ENCODE measurements at regions of chr18 and their contacts with region 1.

Region 1: GRCh38 chr18:54119524-54120019 is 104.9 kb downstream of the MBD2 start:
- DNase-seq: no peak
- H3K4me3 ChIP-seq: no peak overlapping the region
- H3K27ac ChIP-seq: no peak overlapping the region
- H3K4me1 ChIP-seq: no peaks in the 10 kb centered on the region
- H3K27me3 ChIP-seq: no peaks in the 10 kb centered on the region
- CTCF ChIP-seq: peak; percentile 20 to 69 (median 69)

Region 2: DNA sequence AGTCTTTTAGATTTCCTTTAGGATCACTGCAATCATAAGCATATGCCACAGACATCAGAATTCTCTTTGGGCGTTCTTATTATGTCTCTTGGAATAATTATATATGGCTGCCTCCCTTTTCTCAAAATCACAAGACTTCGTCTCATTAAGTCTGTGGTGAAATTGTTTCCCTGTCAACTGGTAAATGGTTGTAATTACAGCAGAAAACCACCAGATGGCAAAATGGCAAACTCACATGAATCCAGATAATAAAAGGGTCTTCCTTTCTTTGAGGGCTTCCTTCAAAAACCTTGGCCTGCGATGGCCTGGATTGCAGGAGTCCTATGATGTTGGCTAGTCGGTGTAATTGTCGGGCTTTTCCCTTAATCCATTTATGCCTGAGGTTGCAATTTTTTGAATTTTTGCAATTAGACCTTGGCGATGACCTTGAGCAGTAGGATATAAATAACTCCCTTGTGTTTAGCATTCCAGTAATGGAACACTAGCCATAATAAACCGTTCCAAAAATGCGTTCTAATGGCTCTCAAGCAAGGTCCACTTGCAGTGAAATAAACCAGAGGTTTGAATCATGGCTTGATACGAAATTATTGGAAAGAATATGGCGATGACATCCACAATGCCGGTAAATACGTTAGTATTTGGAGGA is 551.5 kb before region 1 on chr18:
- intact Hi-C with region 1: loop called (anchors 10 kb)
- DNase-seq: no peak
- H3K4me3 ChIP-seq: no peak overlapping the region
- H3K27ac ChIP-seq: no peak overlapping the region
- H3K4me1 ChIP-seq: no peaks in the 10 kb centered on the region
- H3K27me3 ChIP-seq: no peaks in the 10 kb centered on the region
- CTCF ChIP-seq: peak in 2 of 3 experiments; percentile 30 to 46

Region 3: GRCh38 chr18:53698907-53699306 is 420.7 kb before region 1 on chr18:
- intact Hi-C with region 1: loop called (anchors 10 kb)
- DNase-seq: no peak
- H3K4me3 ChIP-seq: no peak overlapping the region
- H3K27ac ChIP-seq: no peak overlapping the region
- H3K4me1 ChIP-seq: no peaks in the 10 kb centered on the region
- H3K27me3 ChIP-seq: no peaks in the 10 kb centered on the region
- CTCF ChIP-seq: peak in 1 of 3 experiments; percentile 17

Region 4: GRCh38 chr18:54983041-54983686 is 863.6 kb after region 1 on chr18:
- intact Hi-C with region 1: no loop called
- DNase-seq: no peak
- H3K4me3 ChIP-seq: no peak overlapping the region
- H3K27ac ChIP-seq: no peak overlapping the region
- H3K4me1 ChIP-seq: no peaks in the 10 kb centered on the region
- H3K27me3 ChIP-seq: no peaks in the 10 kb centered on the region
- CTCF ChIP-seq: peak; percentile 29 to 49 (median 30)

Measured in ascending aorta (tissue), 2 donors.